Panc1 (cell line): ENCODE measurements at regions of chr10 and their contacts with region 1.

Region 1: GRCh38 chr10:113866551-113867394 is 12.3 kb downstream of the NHLRC2 start:
- DNase-seq: no peak
- ATAC-seq: no peak
- H3K4me3 ChIP-seq: no peak overlapping the region
- H3K27ac ChIP-seq: no peak overlapping the region
- H3K4me1 ChIP-seq: no peaks in the 10 kb centered on the region
- H3K27me3 ChIP-seq: no peaks in the 10 kb centered on the region
- CTCF ChIP-seq: no peak

Region 2: DNA sequence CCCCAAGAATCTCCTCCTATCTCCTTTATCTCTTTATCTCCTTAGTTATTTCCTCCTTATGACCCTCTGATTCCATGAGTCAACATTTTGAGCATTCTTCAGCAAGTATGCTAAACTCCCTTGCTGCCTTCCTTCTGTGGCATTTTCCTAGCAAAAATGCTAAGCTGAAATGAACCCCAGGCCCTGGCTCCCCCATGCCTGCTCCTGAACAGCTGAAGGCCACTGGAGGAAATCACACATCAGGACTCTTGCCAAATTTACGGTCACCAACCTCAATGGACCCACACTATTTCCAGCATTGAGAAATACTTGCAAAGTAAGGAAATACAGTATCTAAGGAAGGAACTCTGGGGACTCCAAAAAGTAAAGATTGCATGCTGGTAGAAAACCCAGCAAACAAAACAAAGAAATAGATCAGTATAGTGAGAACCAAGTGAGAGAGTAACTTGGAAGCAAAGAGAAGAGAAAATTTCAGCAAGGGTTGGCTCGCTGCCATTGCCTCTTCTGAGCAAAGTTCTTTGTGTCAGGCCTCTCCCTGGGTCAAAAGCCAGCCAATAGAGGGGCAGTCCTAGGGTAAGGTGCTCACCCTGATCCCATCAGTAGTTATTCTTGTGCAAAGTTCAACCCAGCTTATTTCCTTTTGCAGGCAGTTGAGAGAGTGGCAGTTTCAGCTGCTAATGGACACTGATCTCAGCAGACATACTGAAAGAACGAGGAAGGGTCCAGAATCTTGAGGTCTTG is 120.4 kb before region 1 on chr10:
- CTCF ChIA-PET with region 1: no interaction called
- POLR2A ChIA-PET with region 1: no interaction called
- in situ Hi-C with region 1: no loop called
- intact Hi-C with region 1: no loop called
- DNase-seq: no peak
- ATAC-seq: no peak
- H3K4me3 ChIP-seq: no peak overlapping the region
- H3K27ac ChIP-seq: no peak overlapping the region
- H3K4me1 ChIP-seq: 0 out of 2 replicates have a peak, but pooled peaks cover 2% of the 10 kb centered on the region
- H3K27me3 ChIP-seq: 0 out of 2 replicates have a peak, but pooled peaks cover 2% of the 10 kb centered on the region
- CTCF ChIP-seq: no peak

Region 3: DNA sequence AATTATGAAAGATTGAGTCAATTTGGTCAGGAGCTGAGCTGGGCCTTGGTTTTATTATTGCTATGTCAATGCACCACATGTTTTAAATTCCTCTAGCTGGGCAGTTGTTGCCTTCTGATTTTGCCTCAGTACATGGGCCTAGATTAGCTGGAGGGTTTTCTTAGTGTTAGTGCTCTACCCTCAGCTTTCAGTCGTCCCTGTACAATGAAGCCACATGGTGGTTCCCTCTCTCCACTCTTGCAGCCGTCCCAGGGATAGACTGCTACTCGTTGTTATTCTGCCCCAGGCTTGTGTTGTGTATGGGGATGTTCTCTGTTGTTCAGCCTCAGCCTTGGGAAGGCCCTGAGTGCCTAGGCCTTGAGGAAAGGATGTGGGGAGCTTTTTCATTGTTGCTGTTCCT is 24.7 kb after region 1 on chr10:
- CTCF ChIA-PET with region 1: no interaction called
- POLR2A ChIA-PET with region 1: no interaction called
- in situ Hi-C with region 1: no loop called
- intact Hi-C with region 1: no loop called
- DNase-seq: no peak
- ATAC-seq: peak; percentile 78
- H3K4me3 ChIP-seq: no peak overlapping the region
- H3K27ac ChIP-seq: no peak overlapping the region; the same call in 1 of the 2 replicates
- H3K4me1 ChIP-seq: 0 out of 2 replicates have a peak, but pooled peaks cover 3% of the 10 kb centered on the region
- H3K27me3 ChIP-seq: no peaks in the 10 kb centered on the region
- CTCF ChIP-seq: peak; percentile 29; the same call in 1 of the 2 replicates

Region 4: DNA sequence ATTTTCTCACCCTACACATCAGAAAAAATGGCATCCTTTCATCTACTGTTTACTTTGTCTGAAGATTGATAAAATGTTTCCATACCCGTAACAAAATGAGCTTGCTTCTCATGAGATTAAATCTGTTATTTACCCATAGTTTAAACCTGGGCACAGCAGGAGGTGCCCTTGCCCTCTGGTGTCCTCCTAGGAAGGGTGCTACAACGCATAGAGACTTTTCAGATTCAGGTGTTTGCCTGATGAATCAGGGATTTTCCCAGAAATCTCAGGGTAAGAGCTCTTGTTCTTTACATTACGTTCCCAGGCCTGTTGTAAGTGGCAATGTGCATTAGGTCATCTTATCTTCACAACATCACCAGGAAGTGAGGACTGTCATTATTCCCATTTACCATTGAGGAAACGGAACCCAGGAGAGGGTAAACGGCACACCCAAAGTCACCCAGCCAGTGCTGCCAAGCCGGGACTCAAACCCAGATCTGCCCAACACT is 60.6 kb after region 1 on chr10:
- CTCF ChIA-PET with region 1: no interaction called
- POLR2A ChIA-PET with region 1: no interaction called
- in situ Hi-C with region 1: no loop called
- intact Hi-C with region 1: no loop called
- DNase-seq: no peak
- ATAC-seq: no peak
- H3K4me3 ChIP-seq: no peak overlapping the region
- H3K27ac ChIP-seq: no peak overlapping the region; the same call in 1 of the 2 replicates
- H3K4me1 ChIP-seq: no peaks in the 10 kb centered on the region
- H3K27me3 ChIP-seq: no peaks in the 10 kb centered on the region
- CTCF ChIP-seq: no peak

Region 5: DNA sequence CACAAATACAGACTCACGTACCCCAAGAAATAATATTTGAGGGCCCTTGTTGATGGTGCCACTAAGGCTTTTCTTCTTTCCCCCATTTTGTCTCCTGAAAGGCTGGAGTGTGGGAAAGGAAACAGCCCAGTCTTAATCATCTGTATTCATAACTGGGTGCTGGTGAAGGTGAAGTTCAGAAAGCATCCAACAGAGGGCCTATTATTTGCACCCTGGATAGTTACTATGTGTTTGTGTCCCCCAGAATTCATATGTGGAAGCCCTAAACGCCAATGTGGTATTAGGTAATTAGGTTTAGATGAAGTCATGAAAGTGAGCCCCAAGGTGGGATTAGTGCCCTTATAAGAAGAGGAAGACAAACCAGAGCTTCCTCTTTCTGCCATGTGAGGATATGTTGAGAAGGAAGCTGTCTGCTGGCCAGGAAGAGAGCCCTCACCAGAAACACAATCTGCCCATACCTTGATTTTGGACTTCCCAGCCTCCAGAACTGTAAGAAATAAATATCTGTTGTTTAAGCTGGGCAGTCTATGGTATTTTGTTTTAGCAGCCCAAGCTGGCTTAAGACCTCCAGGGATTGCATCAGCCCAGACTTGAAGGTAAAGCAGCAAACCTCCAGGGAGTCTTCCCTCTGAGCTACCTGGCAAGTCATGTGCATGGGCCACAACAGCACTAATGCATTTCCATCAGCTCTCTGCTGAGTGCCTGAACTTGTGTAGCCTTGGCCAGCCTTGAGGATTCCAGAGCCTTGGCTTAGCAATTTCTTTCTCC is 86.9 kb after region 1 on chr10:
- CTCF ChIA-PET with region 1: no interaction called
- POLR2A ChIA-PET with region 1: interaction called, 10 read pairs
- in situ Hi-C with region 1: no loop called
- intact Hi-C with region 1: no loop called
- DNase-seq: no peak
- ATAC-seq: no peak
- H3K4me3 ChIP-seq: no peak overlapping the region
- H3K27ac ChIP-seq: peak overlapping the region; percentile 8; the same call in 1 of the 2 replicates
- H3K4me1 ChIP-seq: 0 out of 2 replicates have a peak, but pooled peaks cover 6% of the 10 kb centered on the region
- H3K27me3 ChIP-seq: no peaks in the 10 kb centered on the region
- CTCF ChIP-seq: peak; percentile 41; the same call in 1 of the 2 replicates